MCF 10A (cell line): ENCODE measurements at regions of chr6 and their contacts with region 1.

Region 1: GRCh38 chr6:47701352-47701751 is 3.0 kb downstream of the ADGRF4 start:
- DNase-seq: peak; percentile 84
- H3K4me3 Mint-ChIP-seq: peak overlapping the region; percentile 12
- H3K27ac Mint-ChIP-seq: peak overlapping the region; percentile 95
- H3K4me1 Mint-ChIP-seq: peaks cover 36% of the 10 kb centered on the region
- H3K27me3 Mint-ChIP-seq: no peaks in the 10 kb centered on the region
- CTCF ChIP-seq: no peak

Region 2: DNA sequence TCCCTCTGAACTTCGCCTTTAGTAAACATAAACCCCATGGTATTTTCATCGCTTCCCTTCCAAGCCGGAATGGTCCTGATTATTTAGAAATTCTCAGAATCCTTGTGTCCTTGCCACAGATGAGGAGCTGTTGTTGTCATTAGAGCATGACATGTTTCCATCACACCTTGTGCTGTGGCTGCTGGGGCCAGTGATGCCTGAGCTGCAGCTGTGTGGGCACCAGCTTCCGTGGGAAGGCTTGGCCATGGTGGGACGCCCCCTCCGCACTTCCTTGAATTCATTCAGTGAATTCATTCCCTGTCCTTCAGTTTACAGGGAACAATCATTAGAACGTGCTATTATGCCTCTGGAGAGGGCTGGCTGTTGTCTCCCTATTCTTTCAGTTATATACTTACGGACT is 668.4 kb before region 1 on chr6:
- CTCF ChIA-PET with region 1: no interaction called
- POLR2A ChIA-PET with region 1: no interaction called
- intact Hi-C with region 1: no loop called
- DNase-seq: no peak
- H3K4me3 Mint-ChIP-seq: no peak overlapping the region
- H3K27ac Mint-ChIP-seq: no peak overlapping the region
- H3K4me1 Mint-ChIP-seq: peaks cover 31% of the 10 kb centered on the region
- H3K27me3 Mint-ChIP-seq: no peaks in the 10 kb centered on the region
- CTCF ChIP-seq: no peak

Region 3: GRCh38 chr6:47669684-47670513 is 31.5 kb before region 1 on chr6:
- CTCF ChIA-PET with region 1: interaction called, 6 read pairs
- POLR2A ChIA-PET with region 1: interaction called, 84 read pairs
- intact Hi-C with region 1: no loop called
- DNase-seq: peak; percentile 82
- H3K4me3 Mint-ChIP-seq: peak overlapping the region; percentile 47
- H3K27ac Mint-ChIP-seq: peak overlapping the region; percentile 91
- H3K4me1 Mint-ChIP-seq: peaks cover 28% of the 10 kb centered on the region
- H3K27me3 Mint-ChIP-seq: no peaks in the 10 kb centered on the region
- CTCF ChIP-seq: no peak

Region 4: GRCh38 chr6:47690209-47690608 is 11.1 kb before region 1 on chr6:
- CTCF ChIA-PET with region 1: interaction called, 10 read pairs
- POLR2A ChIA-PET with region 1: interaction called, 4 read pairs
- intact Hi-C with region 1: no loop called
- DNase-seq: peak; percentile 31
- H3K4me3 Mint-ChIP-seq: no peak overlapping the region
- H3K27ac Mint-ChIP-seq: no peak overlapping the region
- H3K4me1 Mint-ChIP-seq: no peaks in the 10 kb centered on the region
- H3K27me3 Mint-ChIP-seq: no peaks in the 10 kb centered on the region
- CTCF ChIP-seq: no peak

Region 5: GRCh38 chr6:47729019-47729418 is 27.7 kb after region 1 on chr6:
- CTCF ChIA-PET with region 1: interaction called, 12 read pairs
- POLR2A ChIA-PET with region 1: interaction called, 47 read pairs
- intact Hi-C with region 1: loop called (anchors 2 kb)
- DNase-seq: peak; percentile 62
- H3K4me3 Mint-ChIP-seq: no peak overlapping the region
- H3K27ac Mint-ChIP-seq: no peak overlapping the region
- H3K4me1 Mint-ChIP-seq: peaks cover 27% of the 10 kb centered on the region
- H3K27me3 Mint-ChIP-seq: no peaks in the 10 kb centered on the region
- CTCF ChIP-seq: no peak

Region 6: DNA sequence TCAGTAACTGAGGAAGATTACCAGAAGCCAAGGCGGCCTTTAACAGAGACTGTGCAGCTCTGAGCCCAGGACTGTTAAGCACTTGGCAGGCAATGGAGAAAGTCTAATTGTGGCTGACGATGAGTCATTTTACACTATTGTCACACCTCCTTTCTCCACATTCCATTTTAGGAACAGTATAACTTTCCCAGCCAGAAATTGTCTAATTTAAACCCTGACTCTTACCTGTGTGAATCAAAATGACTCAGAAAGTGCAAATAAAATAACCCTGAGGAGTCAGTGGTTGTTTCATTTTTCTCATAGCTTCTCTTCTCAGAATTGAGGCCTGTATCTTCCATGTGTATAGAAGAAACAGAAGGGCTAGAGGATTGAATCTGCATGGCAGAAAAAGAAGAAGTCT is 40.5 kb after region 1 on chr6:
- CTCF ChIA-PET with region 1: interaction called, 3 read pairs
- POLR2A ChIA-PET with region 1: interaction called, 10 read pairs
- intact Hi-C with region 1: no loop called
- DNase-seq: peak; percentile 89
- H3K4me3 Mint-ChIP-seq: no peak overlapping the region
- H3K27ac Mint-ChIP-seq: peak overlapping the region; percentile 2
- H3K4me1 Mint-ChIP-seq: peaks cover 12% of the 10 kb centered on the region
- H3K27me3 Mint-ChIP-seq: no peaks in the 10 kb centered on the region
- CTCF ChIP-seq: no peak

Region 7: GRCh38 chr6:48389146-48390043 is 688.0 kb after region 1 on chr6:
- CTCF ChIA-PET with region 1: no interaction called
- POLR2A ChIA-PET with region 1: no interaction called
- intact Hi-C with region 1: no loop called
- DNase-seq: peak; percentile 2
- H3K4me3 Mint-ChIP-seq: no peak overlapping the region
- H3K27ac Mint-ChIP-seq: no peak overlapping the region
- H3K4me1 Mint-ChIP-seq: no peaks in the 10 kb centered on the region
- H3K27me3 Mint-ChIP-seq: no peaks in the 10 kb centered on the region
- CTCF ChIP-seq: no peak